ENCODE measurements at regions of chr11 and their contacts with region 1.

Region 1: GRCh38 chr11:6705905-6706535 is 22.9 kb upstream of the MRPL17 start:
- DNase-seq: peak; percentile 20
- ATAC-seq: peak; percentile 67
- H3K4me3 ChIP-seq: no peak overlapping the region
- H3K27ac ChIP-seq: no peak overlapping the region
- H3K4me1 ChIP-seq: no peaks in the 10 kb centered on the region
- H3K27me3 ChIP-seq: peaks cover 0 to 9% of the 10 kb centered on the region in 2 experiments; a peak in 2 of 5 replicates
- CTCF ChIP-seq: peak; percentile 69
- EP300 ChIP-seq: no peak
- POLR2A ChIP-seq: no peak
- RAD21 ChIP-seq: 0 out of 2 replicates have a peak, but pooled peaks have one; percentile 9

Region 2: GRCh38 chr11:6646918-6647679 is 58.9 kb before region 1 on chr11:
- CTCF ChIA-PET with region 1: no interaction called
- POLR2A ChIA-PET with region 1: no interaction called
- in situ Hi-C with region 1: no loop called
- intact Hi-C with region 1: no loop called
- DNase-seq: no peak
- ATAC-seq: no peak
- H3K4me3 ChIP-seq: no peak overlapping the region
- H3K27ac ChIP-seq: no peak overlapping the region
- H3K4me1 ChIP-seq: no peaks in the 10 kb centered on the region
- H3K27me3 ChIP-seq: peaks cover 3 to 99% of the 10 kb centered on the region in 2 experiments; a peak in 4 of 5 replicates
- CTCF ChIP-seq: no peak
- EP300 ChIP-seq: no peak
- POLR2A ChIP-seq: no peak
- RAD21 ChIP-seq: no peak

Region 3: GRCh38 chr11:6657346-6657745 is 48.7 kb before region 1 on chr11:
- CTCF ChIA-PET with region 1: no interaction called
- POLR2A ChIA-PET with region 1: no interaction called
- in situ Hi-C with region 1: no loop called
- intact Hi-C with region 1: no loop called
- DNase-seq: no peak
- ATAC-seq: no peak
- H3K4me3 ChIP-seq: no peak overlapping the region
- H3K27ac ChIP-seq: no peak overlapping the region
- H3K4me1 ChIP-seq: peaks cover 12% of the 10 kb centered on the region
- H3K27me3 ChIP-seq: peaks cover 14 to 71% of the 10 kb centered on the region in 2 experiments
- CTCF ChIP-seq: no peak
- EP300 ChIP-seq: no peak
- POLR2A ChIP-seq: no peak
- RAD21 ChIP-seq: no peak

Region 4: GRCh38 chr11:6757373-6757967 is 51.5 kb after region 1 on chr11:
- CTCF ChIA-PET with region 1: interaction called, 3 read pairs
- POLR2A ChIA-PET with region 1: no interaction called
- in situ Hi-C with region 1: no loop called
- intact Hi-C with region 1: loop called (anchors 1 kb)
- DNase-seq: peak; percentile 44
- ATAC-seq: peak; percentile 87
- H3K4me3 ChIP-seq: no peak overlapping the region
- H3K27ac ChIP-seq: no peak overlapping the region
- H3K4me1 ChIP-seq: no peaks in the 10 kb centered on the region
- H3K27me3 ChIP-seq: no peaks in the 10 kb centered on the region; a peak in 2 of 5 replicates
- CTCF ChIP-seq: peak; percentile 76
- EP300 ChIP-seq: no peak
- POLR2A ChIP-seq: no peak
- RAD21 ChIP-seq: no peak